Naive thymus-derived CD4-positive, alpha-beta T cell (primary cell): ENCODE measurements at regions of chr1 and their contacts with region 1.

Region 1: GRCh38 chr1:199041173-199041914 is 402.5 kb downstream of the PTPRC start:
- DNase-seq: peak in 7 of 9 donors; percentile 1 to 47 (median 28)
- ATAC-seq: peak; percentile 67
- H3K4me3 ChIP-seq: no peak overlapping the region
- H3K4me3 Mint-ChIP-seq: peak overlapping the region in 9 of 10 donors; percentile 5 to 81 (median 58)
- H3K27ac ChIP-seq: no peak overlapping the region
- H3K27ac Mint-ChIP-seq: peak overlapping the region in 4 of 9 donors; percentile 8 to 74 (median 61)
- H3K4me1 ChIP-seq: peaks cover 20 to 22% of the 10 kb centered on the region in 2 donors
- H3K4me1 Mint-ChIP-seq: peaks cover 20 to 54% (median 33%) of the 10 kb centered on the region in 7 donors
- H3K27me3 ChIP-seq: no peaks in the 10 kb centered on the region
- H3K27me3 Mint-ChIP-seq: peaks cover 0 to 2% (median 0%) of the 10 kb centered on the region in 5 donors

Region 2: GRCh38 chr1:198612471-198613260 is 428.7 kb before region 1 on chr1:
- CTCF ChIA-PET with region 1: no interaction called
- POLR2A ChIA-PET with region 1: no interaction called
- intact Hi-C with region 1: loop called in 1 of 2 experiments (anchors 5 kb)
- DNase-seq: peak in 6 of 9 donors; percentile 30 to 52 (median 41)
- ATAC-seq: peak; percentile 62
- H3K4me3 ChIP-seq: peak overlapping the region; percentile 44
- H3K4me3 Mint-ChIP-seq: peak overlapping the region; percentile 66 to 97 (median 82)
- H3K27ac ChIP-seq: peak overlapping the region; percentile 82
- H3K27ac Mint-ChIP-seq: peak overlapping the region; percentile 95 to 100 (median 98)
- H3K4me1 ChIP-seq: peaks cover 56 to 71% of the 10 kb centered on the region in 2 donors
- H3K4me1 Mint-ChIP-seq: peaks cover 52 to 92% (median 73%) of the 10 kb centered on the region in 7 donors
- H3K27me3 ChIP-seq: no peaks in the 10 kb centered on the region
- H3K27me3 Mint-ChIP-seq: no peaks in the 10 kb centered on the region

Region 3: DNA sequence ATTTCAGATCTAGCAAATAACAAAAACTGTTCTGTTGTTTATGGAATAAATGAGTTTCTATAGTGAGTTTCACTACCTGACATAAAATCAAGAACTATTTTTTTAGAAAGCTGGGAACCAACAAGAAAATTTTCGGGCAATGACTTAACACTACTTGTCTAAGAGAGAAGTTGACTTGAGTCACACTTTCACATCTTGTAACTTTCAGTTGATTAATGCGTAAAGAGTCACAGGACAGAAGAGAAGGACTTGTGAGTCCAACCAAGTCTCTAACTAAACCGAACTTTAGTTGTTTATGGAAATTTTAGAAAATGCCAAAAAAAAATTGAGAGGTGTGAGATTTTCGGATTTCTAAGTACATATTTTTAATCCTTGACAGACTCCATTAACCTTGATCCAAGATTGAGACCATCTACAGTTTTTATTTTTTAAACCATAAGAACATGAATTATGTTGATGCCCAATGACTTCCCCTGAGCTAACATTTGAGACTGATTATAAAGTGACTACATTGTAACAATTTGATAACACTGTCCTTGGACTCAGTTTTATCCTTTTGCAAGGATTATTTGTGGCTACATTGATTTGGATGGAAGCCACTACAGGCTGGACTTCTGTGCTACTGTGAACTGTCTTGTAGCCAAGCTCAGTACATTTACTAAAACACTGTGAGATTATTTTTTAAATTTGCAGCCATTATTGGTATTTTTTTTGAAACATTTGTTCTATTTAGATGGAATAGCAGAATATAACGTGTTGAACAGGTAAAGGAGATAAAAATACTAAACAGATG is 118.5 kb before region 1 on chr1:
- CTCF ChIA-PET with region 1: no interaction called
- POLR2A ChIA-PET with region 1: no interaction called
- intact Hi-C with region 1: loop called in 1 of 2 experiments (anchors 1 kb)
- DNase-seq: no peak
- ATAC-seq: peak; percentile 68
- H3K4me3 ChIP-seq: no peak overlapping the region
- H3K4me3 Mint-ChIP-seq: peak overlapping the region in 2 of 10 donors; percentile 18 to 68
- H3K27ac ChIP-seq: no peak overlapping the region
- H3K27ac Mint-ChIP-seq: peak overlapping the region in 4 of 9 donors; percentile 14 to 81 (median 60)
- H3K4me1 ChIP-seq: peaks cover 0 to 22% of the 10 kb centered on the region in 2 donors
- H3K4me1 Mint-ChIP-seq: peaks cover 30 to 90% (median 75%) of the 10 kb centered on the region in 7 donors
- H3K27me3 ChIP-seq: no peaks in the 10 kb centered on the region
- H3K27me3 Mint-ChIP-seq: no peaks in the 10 kb centered on the region

Region 4: GRCh38 chr1:199009447-199009846 is 31.9 kb before region 1 on chr1:
- CTCF ChIA-PET with region 1: no interaction called
- POLR2A ChIA-PET with region 1: no interaction called
- intact Hi-C with region 1: loop called in 1 of 2 experiments (anchors 2 kb)
- DNase-seq: peak in 4 of 9 donors; percentile 7 to 24 (median 14)
- ATAC-seq: no peak
- H3K4me3 ChIP-seq: peak overlapping the region; percentile 3
- H3K4me3 Mint-ChIP-seq: peak overlapping the region; percentile 3 to 74 (median 56)
- H3K27ac ChIP-seq: no peak overlapping the region
- H3K27ac Mint-ChIP-seq: peak overlapping the region in 5 of 9 donors; percentile 23 to 77 (median 44)
- H3K4me1 ChIP-seq: peaks cover 8 to 19% of the 10 kb centered on the region in 2 donors
- H3K4me1 Mint-ChIP-seq: peaks cover 19 to 52% (median 26%) of the 10 kb centered on the region in 7 donors
- H3K27me3 ChIP-seq: no peaks in the 10 kb centered on the region
- H3K27me3 Mint-ChIP-seq: no peaks in the 10 kb centered on the region

Region 5: GRCh38 chr1:199089393-199090122 is 48.2 kb after region 1 on chr1:
- CTCF ChIA-PET with region 1: no interaction called
- POLR2A ChIA-PET with region 1: no interaction called
- intact Hi-C with region 1: loop called in 1 of 2 experiments (anchors 1 kb)
- DNase-seq: peak in 8 of 9 donors; percentile 25 to 72 (median 48)
- ATAC-seq: peak; percentile 99
- H3K4me3 ChIP-seq: no peak overlapping the region
- H3K4me3 Mint-ChIP-seq: peak overlapping the region in 8 of 10 donors; percentile 7 to 53 (median 48)
- H3K27ac ChIP-seq: no peak overlapping the region
- H3K27ac Mint-ChIP-seq: peak overlapping the region in 2 of 9 donors; percentile 20 to 80
- H3K4me1 ChIP-seq: peaks cover 10 to 21% of the 10 kb centered on the region in 2 donors
- H3K4me1 Mint-ChIP-seq: peaks cover 4 to 43% (median 19%) of the 10 kb centered on the region in 7 donors
- H3K27me3 ChIP-seq: no peaks in the 10 kb centered on the region
- H3K27me3 Mint-ChIP-seq: peaks cover 0 to 4% (median 0%) of the 10 kb centered on the region in 5 donors

Region 6: GRCh38 chr1:199157494-199157893 is 116.2 kb after region 1 on chr1:
- CTCF ChIA-PET with region 1: no interaction called
- POLR2A ChIA-PET with region 1: no interaction called
- intact Hi-C with region 1: no loop called
- DNase-seq: no peak
- ATAC-seq: no peak
- H3K4me3 ChIP-seq: no peak overlapping the region
- H3K4me3 Mint-ChIP-seq: no peak overlapping the region
- H3K27ac ChIP-seq: no peak overlapping the region
- H3K27ac Mint-ChIP-seq: no peak overlapping the region
- H3K4me1 ChIP-seq: no peaks in the 10 kb centered on the region
- H3K4me1 Mint-ChIP-seq: peaks cover 0 to 17% (median 11%) of the 10 kb centered on the region in 7 donors
- H3K27me3 ChIP-seq: no peaks in the 10 kb centered on the region
- H3K27me3 Mint-ChIP-seq: peaks cover 0 to 4% (median 0%) of the 10 kb centered on the region in 5 donors

Region 7: DNA sequence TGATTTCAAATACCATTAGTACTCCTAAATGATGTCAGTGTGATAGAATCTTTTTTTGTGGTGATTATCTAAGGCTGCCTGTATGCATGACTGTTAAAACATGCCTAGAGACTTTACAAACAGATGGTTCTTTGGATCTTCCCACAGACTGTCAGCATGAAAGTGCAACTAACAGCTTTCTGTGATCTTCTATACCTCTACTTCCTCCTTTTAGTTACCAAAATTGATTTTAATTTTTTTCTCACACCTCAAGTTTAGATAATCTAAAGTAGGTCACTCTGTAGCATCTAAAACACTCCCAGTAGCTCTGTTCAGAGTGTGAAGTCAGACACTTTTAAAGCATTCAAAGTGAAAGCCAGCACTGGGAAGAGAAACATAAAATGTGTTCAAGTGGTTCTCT is 132.0 kb after region 1 on chr1:
- CTCF ChIA-PET with region 1: no interaction called
- POLR2A ChIA-PET with region 1: no interaction called
- intact Hi-C with region 1: loop called in 1 of 2 experiments (anchors 1 kb)
- DNase-seq: peak in 7 of 9 donors; percentile 9 to 56 (median 25)
- ATAC-seq: peak; percentile 90
- H3K4me3 ChIP-seq: no peak overlapping the region
- H3K4me3 Mint-ChIP-seq: peak overlapping the region in 7 of 10 donors; percentile 8 to 55 (median 32)
- H3K27ac ChIP-seq: no peak overlapping the region
- H3K27ac Mint-ChIP-seq: peak overlapping the region in 8 of 9 donors; percentile 4 to 73 (median 44)
- H3K4me1 ChIP-seq: peaks cover 23 to 48% of the 10 kb centered on the region in 2 donors
- H3K4me1 Mint-ChIP-seq: peaks cover 28 to 56% (median 43%) of the 10 kb centered on the region in 7 donors
- H3K27me3 ChIP-seq: no peaks in the 10 kb centered on the region
- H3K27me3 Mint-ChIP-seq: peaks cover 0 to 14% (median 0%) of the 10 kb centered on the region in 5 donors

Region 8: GRCh38 chr1:199226163-199226562 is 184.8 kb after region 1 on chr1:
- CTCF ChIA-PET with region 1: no interaction called
- POLR2A ChIA-PET with region 1: no interaction called
- intact Hi-C with region 1: loop called in 1 of 2 experiments (anchors 1 kb)
- DNase-seq: peak in 7 of 9 donors; percentile 10 to 66 (median 30)
- ATAC-seq: peak; percentile 91
- H3K4me3 ChIP-seq: no peak overlapping the region
- H3K4me3 Mint-ChIP-seq: peak overlapping the region in 8 of 10 donors; percentile 2 to 72 (median 36)
- H3K27ac ChIP-seq: no peak overlapping the region
- H3K27ac Mint-ChIP-seq: peak overlapping the region; percentile 5 to 91 (median 56)
- H3K4me1 ChIP-seq: peaks cover 0 to 6% of the 10 kb centered on the region in 2 donors
- H3K4me1 Mint-ChIP-seq: peaks cover 9 to 23% (median 14%) of the 10 kb centered on the region in 7 donors
- H3K27me3 ChIP-seq: no peaks in the 10 kb centered on the region
- H3K27me3 Mint-ChIP-seq: no peaks in the 10 kb centered on the region